H1 (cell line): ENCODE measurements at regions of chr18 and their contacts with region 1.

Region 1: DNA sequence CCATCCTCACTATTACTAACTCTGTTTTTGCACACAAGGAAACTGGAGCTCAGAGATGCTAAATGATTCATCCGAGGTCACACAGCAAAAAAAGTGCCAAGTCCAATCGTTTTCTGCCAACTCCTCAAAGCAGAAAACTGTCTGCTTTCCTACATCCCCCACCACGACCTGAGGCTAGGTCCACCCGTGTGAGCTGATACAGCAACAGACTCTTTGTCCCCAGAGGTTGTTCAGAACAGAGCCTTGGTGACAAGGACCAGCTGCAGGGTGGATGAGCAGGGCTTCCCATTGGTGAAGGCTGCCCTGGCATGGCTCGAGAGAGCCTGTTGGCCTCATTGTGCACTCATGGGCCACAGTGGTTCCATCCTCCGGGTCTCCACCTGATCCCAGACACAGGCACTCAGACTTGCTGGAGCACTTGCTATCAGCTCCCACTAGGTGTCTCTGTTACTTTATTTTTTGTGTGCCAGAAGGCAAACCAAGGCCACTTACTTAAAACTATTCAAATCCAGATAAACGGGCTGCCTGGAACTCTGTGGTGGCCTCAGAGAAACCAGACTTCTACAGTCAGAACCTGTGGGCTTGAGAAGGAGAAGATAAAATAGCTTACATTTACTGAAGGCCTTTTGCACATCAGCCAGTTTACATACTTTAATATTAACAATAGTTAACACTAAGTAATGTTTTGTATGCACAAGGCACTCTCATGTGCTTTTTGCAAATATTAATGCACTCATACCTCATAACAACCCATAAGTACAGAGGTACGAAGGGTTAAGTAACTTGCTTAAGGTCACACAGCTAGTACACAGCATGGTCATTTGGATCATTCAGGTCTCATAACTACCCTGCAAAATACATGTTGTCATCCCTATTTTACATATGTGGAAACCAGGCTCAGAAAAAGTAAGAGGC is 62.9 kb upstream of the CTIF start:
- DNase-seq: peak; percentile 41 to 54
- H3K4me3 ChIP-seq: no peak overlapping the region
- H3K27ac ChIP-seq: no peak overlapping the region
- H3K4me1 ChIP-seq: no peaks in the 10 kb centered on the region
- H3K27me3 ChIP-seq: no peaks in the 10 kb centered on the region
- CTCF ChIP-seq: peak; percentile 55 to 93 (median 84)
- EP300 ChIP-seq: no peak
- POLR2A ChIP-seq: no peak
- RAD21 ChIP-seq: peak; percentile 94 to 97

Region 2: GRCh38 chr18:48488388-48488850 is 12.5 kb after region 1 on chr18:
- CTCF ChIA-PET with region 1: interaction called, 33 read pairs
- POLR2A ChIA-PET with region 1: no interaction called
- DNase-seq: no peak
- H3K4me3 ChIP-seq: no peak overlapping the region
- H3K27ac ChIP-seq: no peak overlapping the region
- H3K4me1 ChIP-seq: no peaks in the 10 kb centered on the region
- H3K27me3 ChIP-seq: no peaks in the 10 kb centered on the region
- CTCF ChIP-seq: no peak
- EP300 ChIP-seq: no peak
- POLR2A ChIP-seq: no peak
- RAD21 ChIP-seq: no peak

Region 3: GRCh38 chr18:48613589-48614404 is 137.9 kb after region 1 on chr18:
- CTCF ChIA-PET with region 1: interaction called, 41 read pairs
- POLR2A ChIA-PET with region 1: no interaction called
- DNase-seq: peak in 1 of 2 experiments; percentile 61
- H3K4me3 ChIP-seq: no peak overlapping the region
- H3K27ac ChIP-seq: no peak overlapping the region
- H3K4me1 ChIP-seq: peaks cover 4 to 16% (median 11%) of the 10 kb centered on the region in 4 experiments
- H3K27me3 ChIP-seq: no peaks in the 10 kb centered on the region
- CTCF ChIP-seq: no peak
- EP300 ChIP-seq: no peak
- POLR2A ChIP-seq: no peak
- RAD21 ChIP-seq: no peak

Region 4: GRCh38 chr18:48663931-48664847 is 188.3 kb after region 1 on chr18:
- CTCF ChIA-PET with region 1: interaction called, 46 read pairs
- POLR2A ChIA-PET with region 1: no interaction called
- DNase-seq: peak; percentile 56 to 99
- H3K4me3 ChIP-seq: no peak overlapping the region
- H3K27ac ChIP-seq: no peak overlapping the region
- H3K4me1 ChIP-seq: peaks cover 0 to 9% (median 5%) of the 10 kb centered on the region in 4 experiments; a peak in 5 of 7 replicates
- H3K27me3 ChIP-seq: no peaks in the 10 kb centered on the region
- CTCF ChIP-seq: peak; percentile 93 to 97 (median 93)
- EP300 ChIP-seq: no peak
- POLR2A ChIP-seq: no peak
- RAD21 ChIP-seq: peak; percentile 83 to 89